Dorsolateral prefrontal cortex (tissue), 120 donors: ENCODE measurements at regions of chr7 and their contacts with region 1.

Region 1: GRCh38 chr7:76179686-76180085 is 22.0 kb upstream of the SRRM3 start:
- DNase-seq: no peak
- H3K4me3 ChIP-seq: no peak overlapping the region
- H3K27ac ChIP-seq: no peak overlapping the region
- H3K27me3 ChIP-seq: no peaks in the 10 kb centered on the region
- CTCF ChIP-seq: peak in 9 of 56 donors; percentile 5 to 32 (median 18)

Region 2: GRCh38 chr7:76201730-76202665 is 22.3 kb after region 1 on chr7 and contains the start of gene SRRM3:
- intact Hi-C with region 1: loop called in 1 of 2 experiments (anchors 2 kb)
- DNase-seq: peak; percentile 53 to 91 (median 79)
- H3K4me3 ChIP-seq: peak within 1 kb of the TSS; percentile 25 to 81 (median 69)
- H3K27ac ChIP-seq: peak within 1 kb of the TSS in 49 of 59 donors; percentile 1 to 88 (median 69)
- H3K27me3 ChIP-seq: peaks cover 0 to 3% (median 0%) of the 10 kb centered on the region in 45 donors
- CTCF ChIP-seq: peak in 55 of 56 donors; percentile 11 to 81 (median 68)
- total RNA-seq, gene SRRM3: 26.3 to 163 (median 102) TPM

Region 3: DNA sequence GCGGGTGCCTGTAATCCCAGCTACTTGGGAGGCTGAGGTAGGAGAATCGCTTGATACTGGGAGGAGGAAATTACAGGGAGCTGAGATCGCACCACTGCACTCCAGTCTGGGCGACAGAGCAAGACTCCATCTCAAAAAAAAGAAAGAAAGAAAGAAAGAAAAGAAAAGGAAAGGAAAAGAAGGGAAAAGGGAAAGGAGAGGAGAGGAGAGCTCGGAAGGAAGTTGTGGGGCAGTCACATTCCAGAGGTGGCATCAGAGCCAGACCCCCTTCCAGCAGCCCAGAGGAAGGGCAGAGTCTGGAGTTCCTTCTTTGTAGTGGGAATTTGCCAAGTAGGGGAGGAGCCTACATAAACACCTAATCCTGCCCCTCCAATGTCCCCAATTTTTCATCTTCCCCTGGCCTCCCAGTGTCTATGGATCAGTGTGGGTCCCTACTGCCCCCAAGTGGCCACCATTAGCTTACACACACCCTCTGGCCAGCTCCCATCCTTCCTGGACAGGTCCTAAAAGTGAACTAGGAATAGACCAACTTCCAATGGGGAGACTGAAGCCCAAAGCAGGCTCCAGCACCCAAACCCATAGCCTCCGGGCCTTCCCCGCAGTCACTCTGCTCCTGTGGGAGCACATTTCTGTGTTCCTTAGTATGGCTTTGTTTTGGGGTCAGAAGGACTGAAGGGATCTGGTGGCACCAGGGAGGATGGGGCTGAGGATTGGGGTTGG is 83.2 kb after region 1 on chr7:
- intact Hi-C with region 1: loop called (anchors 2 to 5 kb)
- DNase-seq: peak in 9 of 10 donors; percentile 33 to 83 (median 66)
- H3K4me3 ChIP-seq: no peak overlapping the region
- H3K27ac ChIP-seq: no peak overlapping the region
- H3K27me3 ChIP-seq: peaks cover 0 to 21% (median 7%) of the 10 kb centered on the region in 45 donors
- CTCF ChIP-seq: peak; percentile 22 to 84 (median 70)

Region 4: DNA sequence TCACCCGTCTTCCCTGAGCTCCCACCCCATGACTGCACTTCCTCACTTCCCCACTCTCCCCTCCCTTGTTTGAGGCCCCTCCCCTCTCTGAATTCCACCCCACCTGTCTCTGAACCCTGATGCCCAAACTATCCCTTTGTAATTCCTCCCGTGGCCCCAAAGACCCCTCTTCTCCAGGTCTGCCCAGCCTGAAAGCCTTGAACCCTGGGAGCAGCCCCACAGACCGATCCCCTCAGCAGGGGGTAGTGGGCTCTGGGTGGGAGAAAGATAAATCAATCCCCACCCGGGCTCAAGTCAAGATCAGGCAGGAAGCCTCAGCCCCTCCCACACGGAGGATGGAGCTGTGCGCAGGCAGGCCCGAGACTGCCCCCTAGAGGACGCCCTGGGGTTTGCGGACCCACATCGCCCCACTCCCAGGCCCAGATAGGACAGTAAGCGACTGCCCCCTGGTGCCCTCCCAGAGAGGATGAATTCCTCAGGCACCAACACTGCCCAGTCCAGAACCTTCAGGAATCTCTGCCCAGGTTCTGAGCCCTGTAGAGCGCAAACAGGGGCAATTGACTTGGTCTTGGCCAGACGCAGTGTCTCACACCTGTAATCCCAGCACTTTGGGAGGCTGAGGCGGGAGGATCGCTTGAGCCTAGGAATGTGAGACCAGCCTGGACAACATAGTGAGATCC is 134.5 kb after region 1 on chr7:
- intact Hi-C with region 1: loop called (anchors 1 to 5 kb)
- DNase-seq: peak; percentile 93 to 97 (median 96)
- H3K4me3 ChIP-seq: peak overlapping the region in 2 of 59 donors; percentile 6 to 27
- H3K27ac ChIP-seq: peak overlapping the region in 24 of 59 donors; percentile 1 to 81 (median 41)
- H3K27me3 ChIP-seq: no peaks in the 10 kb centered on the region
- CTCF ChIP-seq: peak; percentile 79 to 100 (median 100)